Activated naive CD4-positive, alpha-beta T cell treated with anti-CD3 and anti-CD28 coated beads for 36 hours (primary cell): ENCODE measurements at regions of chr2 and their contacts with region 1.

Region 1: GRCh38 chr2:10448208-10448645 is at the start of gene ODC1:
- DNase-seq: peak; percentile 89
- H3K4me3 Mint-ChIP-seq: peak within 1 kb of the TSS; percentile 85
- H3K27ac Mint-ChIP-seq: peak within 1 kb of the TSS; percentile 91
- H3K4me1 Mint-ChIP-seq: peaks cover 56% of the 10 kb centered on the region
- H3K27me3 Mint-ChIP-seq: no peaks in the 10 kb centered on the region
- total RNA-seq, gene ODC1: 174 to 177 TPM

Region 2: DNA sequence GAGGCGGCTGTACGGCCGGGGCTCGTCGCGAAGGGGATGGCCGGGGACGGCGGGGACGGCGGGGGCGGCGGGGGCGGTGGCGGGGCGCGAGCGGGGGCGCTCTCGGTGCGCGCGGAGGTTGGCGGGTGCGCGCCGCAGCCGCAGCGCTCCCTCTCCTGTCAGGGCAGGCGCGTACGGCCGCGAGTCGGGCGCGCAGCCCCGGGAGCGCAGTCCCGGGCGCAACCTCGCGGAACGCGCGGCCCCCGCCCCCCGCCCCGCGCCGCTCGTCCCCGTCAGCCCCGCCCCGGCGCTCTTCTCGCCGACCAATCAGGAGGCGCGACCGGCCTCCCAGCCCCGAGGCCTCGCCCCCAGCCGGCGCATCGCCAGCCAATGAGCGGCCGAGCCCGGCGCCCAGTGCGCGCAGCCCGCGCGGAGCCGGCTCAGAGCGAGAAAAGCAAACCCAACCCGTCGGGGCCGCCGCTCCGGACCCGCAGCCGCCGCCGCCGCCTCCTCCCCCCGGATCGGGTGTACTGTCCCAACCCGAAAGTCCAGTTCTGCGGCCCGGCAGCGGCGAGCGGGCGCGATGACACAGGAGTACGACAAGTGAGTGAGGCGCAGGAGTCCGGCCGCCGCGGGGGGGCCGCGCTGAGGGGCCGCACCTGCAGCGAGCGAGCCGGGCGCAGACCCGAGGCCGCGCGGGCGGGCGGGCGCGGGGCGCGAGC is 496.8 kb before region 1 on chr2 and contains the start of gene GRHL1:
- CTCF ChIA-PET with region 1: no interaction called
- intact Hi-C with region 1: loop called (anchors 1 kb)
- DNase-seq: peak; percentile 88
- H3K4me3 Mint-ChIP-seq: peak within 1 kb of the TSS; percentile 75
- H3K27ac Mint-ChIP-seq: no peak within 1 kb of the TSS
- H3K4me1 Mint-ChIP-seq: peaks cover 2% of the 10 kb centered on the region
- H3K27me3 Mint-ChIP-seq: peaks cover 32% of the 10 kb centered on the region
- total RNA-seq, gene GRHL1: 0.69 to 0.79 TPM

Region 3: DNA sequence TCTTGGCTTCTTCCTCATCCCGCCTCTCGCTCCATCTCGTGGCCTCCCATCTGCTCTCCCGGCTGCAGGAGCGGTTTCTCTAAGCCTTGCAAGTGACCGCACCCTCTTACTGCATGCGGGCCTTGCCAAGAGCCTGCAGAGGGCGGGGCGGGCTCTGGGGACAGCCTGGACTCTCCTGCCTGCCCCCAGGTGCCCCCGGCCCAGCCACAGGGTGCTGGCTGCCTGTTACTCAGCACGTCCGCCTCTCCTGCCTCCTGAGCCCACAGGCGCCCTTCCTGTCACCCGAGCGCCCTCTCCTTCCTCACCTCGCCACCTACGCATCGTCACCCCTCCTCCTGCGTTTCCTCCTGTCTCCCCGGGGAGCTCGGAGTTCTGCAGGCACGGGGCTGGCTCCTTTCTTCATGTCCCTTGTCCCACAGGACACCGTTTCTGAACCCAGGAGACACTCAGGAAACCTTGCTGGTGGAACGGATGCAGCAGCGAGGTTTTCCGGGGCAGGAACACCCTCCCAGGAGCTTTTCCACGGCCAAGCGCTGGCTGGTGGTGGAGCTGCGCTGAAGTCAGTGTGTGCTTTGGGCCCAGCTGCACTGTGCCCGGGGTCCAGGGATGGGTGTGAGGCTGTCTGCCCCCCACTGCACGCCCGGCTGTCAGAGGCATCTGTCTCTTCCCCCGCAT is 117.1 kb before region 1 on chr2:
- CTCF ChIA-PET with region 1: no interaction called
- intact Hi-C with region 1: loop called (anchors 1 kb)
- DNase-seq: peak; percentile 92
- H3K4me3 Mint-ChIP-seq: peak overlapping the region; percentile 86
- H3K27ac Mint-ChIP-seq: peak overlapping the region; percentile 91
- H3K4me1 Mint-ChIP-seq: peaks cover 77% of the 10 kb centered on the region
- H3K27me3 Mint-ChIP-seq: no peaks in the 10 kb centered on the region

Region 4: DNA sequence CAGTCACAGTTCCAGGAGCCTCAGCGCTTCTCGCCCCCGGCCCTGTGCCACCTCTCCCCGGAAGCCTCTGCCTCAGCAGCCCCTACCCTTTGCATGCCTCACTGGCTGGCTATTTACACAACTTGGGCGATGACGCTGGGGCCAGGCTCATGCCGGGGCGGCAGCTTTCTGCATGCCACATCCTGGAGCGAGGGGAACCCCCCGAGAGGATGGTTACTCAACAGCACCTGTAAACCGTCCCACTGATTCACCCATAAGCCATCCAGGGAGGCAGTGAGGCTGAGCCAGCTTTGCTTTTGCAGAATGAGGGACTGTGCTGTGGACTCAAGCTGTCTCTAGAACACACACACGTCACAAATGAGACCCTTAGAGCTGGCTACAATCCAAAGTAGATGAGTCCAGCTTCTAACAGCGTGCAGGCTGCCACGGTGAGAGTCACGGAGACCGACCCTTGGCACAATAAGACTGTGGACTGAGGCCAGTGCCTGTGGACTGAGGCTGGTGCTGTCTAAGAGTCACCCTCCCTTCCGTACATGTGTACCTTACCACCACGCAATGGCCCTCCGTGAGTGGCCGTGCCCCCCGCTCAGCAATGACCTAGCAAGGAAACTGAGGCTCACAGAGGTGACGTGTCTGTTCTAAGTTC is 45.5 kb after region 1 on chr2:
- CTCF ChIA-PET with region 1: no interaction called
- intact Hi-C with region 1: loop called (anchors 1 kb)
- DNase-seq: peak; percentile 89
- H3K4me3 Mint-ChIP-seq: no peak overlapping the region
- H3K27ac Mint-ChIP-seq: peak overlapping the region; percentile 46
- H3K4me1 Mint-ChIP-seq: peaks cover 13% of the 10 kb centered on the region
- H3K27me3 Mint-ChIP-seq: peaks cover 4% of the 10 kb centered on the region

Region 5: DNA sequence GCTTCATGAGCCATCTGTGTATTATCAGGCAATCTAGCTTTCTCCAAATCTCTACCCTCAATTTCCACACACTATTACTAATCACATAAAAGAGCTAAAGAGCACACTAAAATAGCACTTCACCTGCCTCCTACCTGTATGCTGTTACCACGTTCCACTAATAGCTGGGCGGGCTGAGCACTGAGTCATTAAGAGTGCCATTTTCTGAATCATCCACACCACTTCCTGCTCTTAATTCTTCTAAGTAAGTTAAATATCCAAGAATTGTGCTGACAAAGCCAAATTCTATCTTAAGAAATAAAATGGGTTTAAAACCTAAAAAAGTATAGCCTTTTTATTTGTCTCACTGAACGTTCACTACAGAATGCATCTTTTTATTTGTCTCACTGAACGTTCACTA is 205.8 kb after region 1 on chr2:
- CTCF ChIA-PET with region 1: no interaction called
- intact Hi-C with region 1: loop called (anchors 1 kb)
- DNase-seq: peak; percentile 87
- H3K4me3 Mint-ChIP-seq: peak overlapping the region; percentile 29
- H3K27ac Mint-ChIP-seq: peak overlapping the region; percentile 92
- H3K4me1 Mint-ChIP-seq: peaks cover 46% of the 10 kb centered on the region
- H3K27me3 Mint-ChIP-seq: no peaks in the 10 kb centered on the region

Region 6: DNA sequence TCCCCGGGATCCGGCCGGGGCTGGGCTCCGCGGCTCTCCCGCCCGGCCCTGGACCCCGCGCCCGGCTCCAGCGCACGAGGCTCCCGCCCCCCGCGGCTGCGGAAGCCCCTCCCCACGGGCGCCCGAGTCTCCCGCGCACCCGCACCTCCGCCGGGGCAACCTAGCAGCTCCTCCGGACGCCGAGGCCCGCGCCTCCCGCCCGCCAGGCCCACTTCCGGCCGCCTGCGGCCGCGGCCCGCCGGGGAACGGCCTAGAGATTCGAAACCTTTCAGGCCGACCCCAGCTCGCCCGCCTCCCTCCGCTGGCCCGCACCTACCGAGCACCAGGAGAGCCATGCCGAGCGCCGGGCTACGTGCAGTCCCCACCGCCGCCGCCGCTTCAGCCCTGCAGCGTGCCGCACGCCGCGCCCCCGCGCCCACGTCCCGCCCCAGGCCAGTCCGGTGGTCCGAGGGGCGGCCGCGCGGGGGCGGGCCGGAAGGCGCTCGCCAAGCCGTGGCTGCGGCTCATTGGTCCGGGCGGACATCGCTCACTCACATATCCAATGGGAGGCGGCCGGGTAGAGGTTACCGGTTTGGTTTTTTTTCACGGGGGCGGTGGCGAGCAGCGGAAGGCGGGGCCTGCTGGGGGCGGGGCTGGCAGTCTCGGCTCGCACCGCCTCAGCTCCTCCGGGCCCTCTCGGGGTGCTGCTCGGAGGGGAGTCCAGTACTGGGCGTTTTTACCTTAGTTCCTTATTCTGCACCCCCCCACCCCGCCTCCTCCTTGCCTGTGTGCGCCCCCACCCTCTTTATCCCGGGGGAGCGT is 364.3 kb after region 1 on chr2 and contains the start of gene PDIA6:
- CTCF ChIA-PET with region 1: no interaction called
- intact Hi-C with region 1: loop called (anchors 5 kb)
- DNase-seq: peak; percentile 96
- H3K4me3 Mint-ChIP-seq: peak within 1 kb of the TSS; percentile 85
- H3K27ac Mint-ChIP-seq: peak within 1 kb of the TSS; percentile 85
- H3K4me1 Mint-ChIP-seq: peaks cover 34% of the 10 kb centered on the region
- H3K27me3 Mint-ChIP-seq: no peaks in the 10 kb centered on the region
- total RNA-seq, gene PDIA6: 103 to 106 TPM